ENCODE measurements at regions of chr9 and their contacts with region 1.

Region 1: DNA sequence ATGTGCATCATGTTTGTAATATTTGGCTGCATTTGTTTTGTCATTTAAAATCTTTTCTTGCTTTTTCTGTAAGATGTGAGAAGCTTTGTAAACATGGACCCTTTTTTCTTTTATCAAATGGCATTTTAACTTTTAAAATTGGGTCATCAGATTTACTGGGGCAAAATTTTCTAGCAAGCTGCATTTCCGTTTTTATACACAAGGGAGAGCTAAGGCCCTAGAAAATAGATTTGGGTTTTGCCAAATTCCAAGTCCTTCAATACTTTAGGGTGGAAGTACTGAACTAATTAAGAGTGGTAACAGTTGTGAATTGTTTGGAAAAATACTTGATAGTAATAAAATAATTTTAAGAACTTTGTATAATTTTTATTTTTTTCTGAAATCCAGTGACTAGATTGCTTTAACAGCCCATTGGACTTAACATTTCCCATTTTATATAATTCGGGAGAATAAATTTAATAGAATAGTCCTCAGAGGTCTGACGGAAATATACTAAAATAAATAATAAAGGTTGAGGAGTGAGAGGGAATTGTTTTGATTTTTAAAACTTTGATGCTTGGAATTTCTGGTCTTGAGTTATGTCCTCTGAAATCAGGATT is 117.4 kb downstream of the SMARCA2 start:
- DNase-seq: no peak
- H3K4me3 ChIP-seq: no peak overlapping the region
- H3K27ac ChIP-seq: no peak overlapping the region
- H3K4me1 ChIP-seq: no peaks in the 10 kb centered on the region
- H3K27me3 ChIP-seq: no peaks in the 10 kb centered on the region
- CTCF ChIP-seq: peak; percentile 75 to 76

Region 2: GRCh38 chr9:1875921-1876448 is 256.6 kb before region 1 on chr9:
- CTCF ChIA-PET with region 1: no interaction called
- dilution Hi-C with region 1: no loop called
- in situ Hi-C with region 1: no loop called
- intact Hi-C with region 1: no loop called
- DNase-seq: no peak
- H3K4me3 ChIP-seq: no peak overlapping the region
- H3K27ac ChIP-seq: no peak overlapping the region
- H3K4me1 ChIP-seq: no peaks in the 10 kb centered on the region
- H3K27me3 ChIP-seq: no peaks in the 10 kb centered on the region
- CTCF ChIP-seq: no peak

Region 3: GRCh38 chr9:2179567-2179966 is 47.0 kb after region 1 on chr9:
- CTCF ChIA-PET with region 1: no interaction called
- dilution Hi-C with region 1: no loop called
- in situ Hi-C with region 1: no loop called
- intact Hi-C with region 1: loop called (anchors 1 kb)
- DNase-seq: peak; percentile 44
- H3K4me3 ChIP-seq: no peak overlapping the region
- H3K27ac ChIP-seq: no peak overlapping the region
- H3K4me1 ChIP-seq: no peaks in the 10 kb centered on the region
- H3K27me3 ChIP-seq: no peaks in the 10 kb centered on the region
- CTCF ChIP-seq: no peak

Region 4: GRCh38 chr9:2800393-2801179 is 668.0 kb after region 1 on chr9:
- CTCF ChIA-PET with region 1: no interaction called
- dilution Hi-C with region 1: no loop called
- in situ Hi-C with region 1: no loop called
- intact Hi-C with region 1: loop called (anchors 5 kb)
- DNase-seq: peak; percentile 59
- H3K4me3 ChIP-seq: no peak overlapping the region
- H3K27ac ChIP-seq: no peak overlapping the region
- H3K4me1 ChIP-seq: peaks cover 14% of the 10 kb centered on the region
- H3K27me3 ChIP-seq: no peaks in the 10 kb centered on the region
- CTCF ChIP-seq: peak; percentile 47 to 63

Region 5: DNA sequence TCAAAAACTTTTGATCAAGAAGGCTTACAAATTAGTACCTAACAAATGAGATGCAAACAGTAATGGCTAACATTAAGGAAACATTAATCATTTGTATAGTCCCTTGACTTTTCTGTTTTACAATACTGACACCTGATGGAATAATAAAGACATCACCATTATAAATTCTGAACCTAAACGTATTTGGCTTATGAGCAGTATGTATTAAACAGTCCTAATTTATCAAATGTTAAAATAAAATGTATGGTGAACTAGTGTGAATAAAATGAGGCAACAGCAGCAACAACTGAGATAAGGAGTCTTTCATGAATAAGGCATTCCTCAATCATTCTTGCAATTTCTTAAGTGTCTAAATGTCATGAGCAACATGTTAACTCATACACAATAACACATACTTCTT is 705.3 kb after region 1 on chr9:
- CTCF ChIA-PET with region 1: no interaction called
- dilution Hi-C with region 1: no loop called
- in situ Hi-C with region 1: no loop called
- intact Hi-C with region 1: loop called (anchors 5 kb)
- DNase-seq: no peak
- H3K4me3 ChIP-seq: no peak overlapping the region
- H3K27ac ChIP-seq: no peak overlapping the region
- H3K4me1 ChIP-seq: peaks cover 18% of the 10 kb centered on the region
- H3K27me3 ChIP-seq: no peaks in the 10 kb centered on the region
- CTCF ChIP-seq: peak; percentile 15 to 42

Measured in mammary epithelial cell (primary cell).